Sigmoid colon (tissue), 7 donors: ENCODE measurements at regions of chr9 and their contacts with region 1.

Region 1: GRCh38 chr9:87684627-87685219 is 41.2 kb upstream of the CTSL start:
- DNase-seq: no peak
- H3K4me3 ChIP-seq: no peak overlapping the region
- H3K27ac ChIP-seq: peak overlapping the region in 2 of 4 donors; percentile 59 to 66
- H3K4me1 ChIP-seq: peaks cover 0 to 34% (median 29%) of the 10 kb centered on the region in 4 donors
- H3K27me3 ChIP-seq: no peaks in the 10 kb centered on the region
- CTCF ChIP-seq: peak; percentile 24 to 73 (median 60)
- EP300 ChIP-seq: no peak
- POLR2A ChIP-seq: no peak

Region 2: GRCh38 chr9:87650611-87651295 is 34.0 kb before region 1 on chr9:
- intact Hi-C with region 1: no loop called
- DNase-seq: no peak
- H3K4me3 ChIP-seq: no peak overlapping the region
- H3K27ac ChIP-seq: no peak overlapping the region
- H3K4me1 ChIP-seq: peaks cover 0 to 5% (median under 1%) of the 10 kb centered on the region in 4 donors
- H3K27me3 ChIP-seq: no peaks in the 10 kb centered on the region
- CTCF ChIP-seq: no peak
- EP300 ChIP-seq: no peak
- POLR2A ChIP-seq: no peak

Region 3: GRCh38 chr9:87725900-87726709 is 41.4 kb after region 1 on chr9 and contains the start of gene CTSL:
- intact Hi-C with region 1: loop called (anchors 5 kb)
- DNase-seq: peak; percentile 98
- H3K4me3 ChIP-seq: peak within 1 kb of the TSS; percentile 59 to 83 (median 72)
- H3K27ac ChIP-seq: peak within 1 kb of the TSS; percentile 94 to 97 (median 95)
- H3K4me1 ChIP-seq: peaks cover 0 to 51% (median 36%) of the 10 kb centered on the region in 4 donors
- H3K27me3 ChIP-seq: no peaks in the 10 kb centered on the region
- CTCF ChIP-seq: peak in 1 of 4 experiments; percentile 19
- EP300 ChIP-seq: peak in 1 of 4 donors; percentile 42
- POLR2A ChIP-seq: peak in 1 of 2 donors; percentile 63
- total RNA-seq, gene CTSL: 107 to 179 (median 147) TPM

Region 4: DNA sequence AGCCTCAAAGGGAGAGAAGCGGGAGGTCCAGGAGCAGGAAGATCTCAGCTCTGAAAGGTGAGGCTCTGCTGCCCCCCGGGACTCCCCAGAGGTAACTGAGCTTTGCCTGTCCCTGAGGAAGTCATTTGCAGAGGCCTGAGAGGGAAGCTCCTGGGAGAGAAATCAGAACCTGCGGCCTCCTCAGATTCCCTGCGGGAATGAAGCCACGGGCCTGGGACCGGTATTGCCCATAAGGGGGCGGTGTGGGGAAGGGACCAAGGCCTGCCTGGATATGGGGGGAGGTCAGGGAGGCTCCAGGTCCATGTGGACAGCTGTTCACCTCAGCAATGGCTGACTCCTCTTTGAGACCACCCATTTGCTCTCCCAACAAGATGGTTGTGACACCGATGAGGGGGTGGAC is 199.3 kb after region 1 on chr9:
- intact Hi-C with region 1: loop called (anchors 5 kb)
- DNase-seq: no peak
- H3K4me3 ChIP-seq: no peak overlapping the region
- H3K27ac ChIP-seq: no peak overlapping the region
- H3K4me1 ChIP-seq: peaks cover 0 to 7% (median 5%) of the 10 kb centered on the region in 4 donors
- H3K27me3 ChIP-seq: no peaks in the 10 kb centered on the region
- CTCF ChIP-seq: no peak
- EP300 ChIP-seq: no peak
- POLR2A ChIP-seq: no peak

Region 5: GRCh38 chr9:87973730-87974292 is 289.1 kb after region 1 on chr9:
- intact Hi-C with region 1: loop called (anchors 5 kb)
- DNase-seq: no peak
- H3K4me3 ChIP-seq: peak overlapping the region; percentile 45 to 68 (median 60)
- H3K27ac ChIP-seq: peak overlapping the region; percentile 72 to 84 (median 76)
- H3K4me1 ChIP-seq: peaks cover 0 to 21% (median 11%) of the 10 kb centered on the region in 4 donors
- H3K27me3 ChIP-seq: no peaks in the 10 kb centered on the region
- CTCF ChIP-seq: no peak
- EP300 ChIP-seq: no peak
- POLR2A ChIP-seq: no peak

Region 6: DNA sequence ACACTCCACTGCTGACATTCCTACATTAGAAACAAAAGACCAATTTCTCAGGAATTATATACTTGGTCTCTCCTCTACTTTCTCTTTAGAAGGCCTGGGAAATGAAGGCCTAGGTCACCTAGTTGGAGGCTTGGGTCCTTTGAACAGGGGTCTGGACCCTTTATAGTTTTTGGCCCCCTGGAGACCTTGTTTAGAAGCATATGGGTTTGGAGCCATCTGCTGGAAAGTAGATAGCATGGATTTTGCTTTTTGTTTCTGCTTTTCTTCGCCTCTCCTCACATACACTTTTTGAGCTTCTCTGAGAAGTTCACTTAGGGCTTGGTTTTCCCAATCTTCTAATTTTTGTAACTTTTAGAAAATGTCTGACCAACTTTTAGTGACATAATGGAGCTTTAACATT is 356.7 kb after region 1 on chr9:
- intact Hi-C with region 1: loop called (anchors 2 kb)
- DNase-seq: no peak
- H3K4me3 ChIP-seq: no peak overlapping the region
- H3K27ac ChIP-seq: no peak overlapping the region
- H3K4me1 ChIP-seq: no peaks in the 10 kb centered on the region
- H3K27me3 ChIP-seq: no peaks in the 10 kb centered on the region
- CTCF ChIP-seq: peak in 3 of 4 experiments; percentile 15 to 49 (median 26)
- EP300 ChIP-seq: no peak
- POLR2A ChIP-seq: no peak